ENCODE measurements at regions of chr10 and their contacts with region 1.

Region 1: DNA sequence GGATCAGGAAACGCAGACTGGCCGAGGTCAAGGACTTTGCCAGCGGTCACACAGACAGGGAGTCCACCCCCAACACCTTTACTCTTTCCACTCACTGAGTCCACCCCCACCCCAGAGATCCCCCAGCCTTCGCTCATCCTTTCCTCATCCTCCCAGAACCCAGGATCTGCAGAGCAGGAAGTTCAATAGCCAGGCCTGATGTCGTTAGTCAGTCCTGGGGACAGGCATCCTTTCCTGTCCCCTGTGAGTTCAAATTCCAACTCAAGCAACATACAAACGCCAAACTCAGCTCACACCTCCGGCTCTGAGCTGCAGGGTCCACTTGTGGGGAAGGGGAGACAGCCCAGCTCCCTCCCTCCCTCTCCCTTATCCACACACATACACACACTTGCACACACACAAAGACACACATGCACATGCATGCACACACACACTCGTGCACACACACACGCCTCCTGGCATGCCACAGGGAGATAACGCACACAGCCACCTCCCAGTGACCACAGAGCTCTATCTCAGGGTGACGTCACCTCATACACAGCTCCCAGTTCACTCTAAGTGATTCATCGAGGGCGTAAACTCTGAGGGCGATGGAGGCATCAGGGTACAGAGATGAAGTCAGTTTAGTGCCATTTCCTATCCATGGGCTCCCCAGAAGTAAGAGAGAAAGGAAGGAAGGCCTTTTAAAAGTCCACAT is 23.9 kb downstream of the CALML3 start:
- DNase-seq: peak; percentile 72

Region 2: GRCh38 chr10:5446390-5446926 is 102.2 kb before region 1 on chr10:
- intact Hi-C with region 1: loop called (anchors 10 kb)
- DNase-seq: peak; percentile 93

Region 3: GRCh38 chr10:5584895-5585516 is 36.3 kb after region 1 on chr10:
- intact Hi-C with region 1: loop called (anchors 5 kb)
- DNase-seq: no peak

Measured in cardiac septum (tissue), 1 donor.